ENCODE measurements at regions of chr17 and their contacts with region 1.

Region 1: GRCh38 chr17:50222922-50223321 is 21.5 kb upstream of the COL1A1 start:
- DNase-seq: no peak
- ATAC-seq: no peak
- H3K4me3 ChIP-seq: no peak overlapping the region
- H3K4me3 Mint-ChIP-seq: no peak overlapping the region
- H3K27ac ChIP-seq: no peak overlapping the region
- H3K27ac Mint-ChIP-seq: no peak overlapping the region
- H3K4me1 ChIP-seq: no peaks in the 10 kb centered on the region
- H3K4me1 Mint-ChIP-seq: no peaks in the 10 kb centered on the region
- H3K27me3 ChIP-seq: no peaks in the 10 kb centered on the region
- H3K27me3 Mint-ChIP-seq: peaks cover 5% of the 10 kb centered on the region
- CTCF ChIP-seq: no peak

Region 2: DNA sequence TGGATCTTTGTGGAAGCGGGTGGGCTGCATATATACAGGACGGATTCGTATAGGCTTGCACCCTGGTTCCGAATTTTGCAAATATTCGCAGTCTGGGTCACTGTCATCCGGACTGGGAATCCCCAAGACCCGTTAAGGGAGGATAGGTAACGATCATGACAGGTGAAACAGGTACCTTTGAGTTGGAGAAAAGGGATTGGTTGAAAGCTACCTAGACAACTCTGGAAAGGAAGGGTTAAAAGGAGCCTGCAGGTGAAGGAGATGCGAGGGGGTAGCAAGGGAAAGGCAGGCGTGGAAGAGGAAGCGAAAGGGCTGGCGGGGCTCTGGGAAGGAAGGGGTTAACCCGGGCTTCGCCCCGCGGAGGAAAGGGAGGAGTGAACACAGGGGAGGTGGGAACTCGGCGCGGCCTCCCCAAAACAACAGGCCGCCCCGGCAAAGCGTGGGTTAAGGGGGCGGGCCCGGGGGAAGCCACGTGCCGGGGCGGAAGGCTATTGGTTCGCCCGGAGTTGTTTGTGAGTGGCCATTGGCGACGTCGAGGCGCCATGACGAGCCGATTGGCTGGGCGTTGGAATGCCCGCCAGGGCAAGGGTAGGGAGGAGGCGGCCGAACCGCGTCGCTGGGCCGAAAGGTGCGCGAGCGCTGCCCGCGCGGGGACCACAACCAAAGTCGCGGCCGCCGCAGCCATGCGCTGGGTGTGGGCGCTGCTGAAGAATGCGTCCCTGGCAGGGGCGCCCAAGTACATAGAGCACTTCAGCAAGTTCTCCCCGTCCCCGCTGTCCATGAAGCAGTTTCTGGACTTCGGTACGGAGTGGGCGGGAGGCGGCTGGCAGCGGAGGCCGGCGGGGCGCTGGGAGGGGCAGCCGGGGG is 127.9 kb before region 1 on chr17 and contains the start of gene PDK2:
- CTCF ChIA-PET with region 1: no interaction called
- POLR2A ChIA-PET with region 1: no interaction called
- intact Hi-C with region 1: no loop called
- DNase-seq: peak; percentile 98
- ATAC-seq: peak; percentile 93
- H3K4me3 ChIP-seq: peak within 1 kb of the TSS; percentile 61 to 95 (median 89)
- H3K4me3 Mint-ChIP-seq: peak within 1 kb of the TSS; percentile 99
- H3K27ac ChIP-seq: peak within 1 kb of the TSS; percentile 3 to 77
- H3K27ac Mint-ChIP-seq: peak within 1 kb of the TSS; percentile 94
- H3K4me1 ChIP-seq: peaks cover 8 to 20% of the 10 kb centered on the region in 2 donors
- H3K4me1 Mint-ChIP-seq: peaks cover 27% of the 10 kb centered on the region
- H3K27me3 ChIP-seq: peaks cover 0 to 3% (median 0%) of the 10 kb centered on the region in 4 experiments
- H3K27me3 Mint-ChIP-seq: no peaks in the 10 kb centered on the region
- CTCF ChIP-seq: no peak
- total RNA-seq, gene PDK2: 35.2 and 36.7 TPM in 2 replicates

Region 3: GRCh38 chr17:50276588-50277356 is 53.9 kb after region 1 on chr17:
- CTCF ChIA-PET with region 1: no interaction called
- POLR2A ChIA-PET with region 1: no interaction called
- intact Hi-C with region 1: loop called (anchors 2 kb)
- DNase-seq: no peak
- ATAC-seq: no peak
- H3K4me3 ChIP-seq: no peak overlapping the region
- H3K4me3 Mint-ChIP-seq: no peak overlapping the region
- H3K27ac ChIP-seq: no peak overlapping the region
- H3K27ac Mint-ChIP-seq: no peak overlapping the region
- H3K4me1 ChIP-seq: peaks cover 7 to 8% of the 10 kb centered on the region in 2 donors
- H3K4me1 Mint-ChIP-seq: peaks cover 11% of the 10 kb centered on the region
- H3K27me3 ChIP-seq: peaks cover 0 to 70% (median 14%) of the 10 kb centered on the region in 4 experiments
- H3K27me3 Mint-ChIP-seq: peaks cover 57% of the 10 kb centered on the region
- CTCF ChIP-seq: no peak